ENCODE measurements at regions of chr14 and their contacts with region 1.

Region 1: GRCh38 chr14:103808403-103809001 is 38.9 kb downstream of the PPP1R13B start:
- DNase-seq: peak; percentile 85
- H3K4me3 ChIP-seq: no peak overlapping the region
- H3K27ac ChIP-seq: no peak overlapping the region
- H3K4me1 ChIP-seq: no peaks in the 10 kb centered on the region
- H3K27me3 ChIP-seq: no peaks in the 10 kb centered on the region
- CTCF ChIP-seq: peak; percentile 89

Region 2: GRCh38 chr14:103867523-103867953 is 59.0 kb after region 1 on chr14:
- CTCF ChIA-PET with region 1: no interaction called
- POLR2A ChIA-PET with region 1: interaction called, 16 read pairs
- intact Hi-C with region 1: no loop called
- DNase-seq: peak; percentile 45
- H3K4me3 ChIP-seq: no peak overlapping the region
- H3K27ac ChIP-seq: no peak overlapping the region
- H3K4me1 ChIP-seq: peaks cover 13% of the 10 kb centered on the region
- H3K27me3 ChIP-seq: no peaks in the 10 kb centered on the region
- CTCF ChIP-seq: no peak

Region 3: GRCh38 chr14:103910262-103910935 is 101.9 kb after region 1 on chr14:
- CTCF ChIA-PET with region 1: interaction called, 9 read pairs
- POLR2A ChIA-PET with region 1: no interaction called
- intact Hi-C with region 1: loop called (anchors 2 kb)
- DNase-seq: peak; percentile 86
- H3K4me3 ChIP-seq: no peak overlapping the region
- H3K27ac ChIP-seq: no peak overlapping the region
- H3K4me1 ChIP-seq: peaks cover 14% of the 10 kb centered on the region
- H3K27me3 ChIP-seq: no peaks in the 10 kb centered on the region
- CTCF ChIP-seq: peak; percentile 85

Region 4: DNA sequence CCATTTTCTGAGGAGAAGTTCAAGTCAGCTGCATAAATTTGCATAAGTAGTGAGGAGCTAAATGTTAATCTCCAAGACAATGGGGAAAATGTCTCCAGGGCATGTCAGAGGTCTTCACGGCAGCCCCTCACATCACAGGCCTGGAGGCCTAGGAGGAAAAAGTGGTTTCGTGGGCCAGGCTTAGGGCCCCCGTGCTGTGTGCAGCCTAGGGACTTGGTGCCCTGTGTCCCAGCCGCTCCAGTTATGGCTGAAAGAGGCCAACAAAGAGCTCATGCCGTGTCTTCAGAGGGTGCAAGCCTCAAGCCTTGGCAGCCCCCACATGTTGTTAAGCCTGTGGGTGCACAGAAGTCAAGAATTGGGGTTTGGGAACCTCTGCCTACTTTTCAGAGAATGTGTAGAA is 175.7 kb after region 1 on chr14:
- CTCF ChIA-PET with region 1: interaction called, 6 read pairs
- POLR2A ChIA-PET with region 1: no interaction called
- intact Hi-C with region 1: loop called (anchors 1 kb)
- DNase-seq: no peak
- H3K4me3 ChIP-seq: no peak overlapping the region
- H3K27ac ChIP-seq: no peak overlapping the region
- H3K4me1 ChIP-seq: no peaks in the 10 kb centered on the region
- H3K27me3 ChIP-seq: no peaks in the 10 kb centered on the region
- CTCF ChIP-seq: no peak

Region 5: GRCh38 chr14:104064003-104064402 is 255.5 kb after region 1 on chr14:
- CTCF ChIA-PET with region 1: no interaction called
- POLR2A ChIA-PET with region 1: no interaction called
- intact Hi-C with region 1: no loop called
- DNase-seq: no peak
- H3K4me3 ChIP-seq: no peak overlapping the region
- H3K27ac ChIP-seq: no peak overlapping the region
- H3K4me1 ChIP-seq: no peaks in the 10 kb centered on the region
- H3K27me3 ChIP-seq: peaks cover 9% of the 10 kb centered on the region
- CTCF ChIP-seq: no peak

Region 6: GRCh38 chr14:104078031-104078455 is 269.5 kb after region 1 on chr14:
- CTCF ChIA-PET with region 1: interaction called, 5 read pairs
- POLR2A ChIA-PET with region 1: no interaction called
- intact Hi-C with region 1: loop called (anchors 5 kb)
- DNase-seq: peak; percentile 91
- H3K4me3 ChIP-seq: no peak overlapping the region
- H3K27ac ChIP-seq: no peak overlapping the region
- H3K4me1 ChIP-seq: no peaks in the 10 kb centered on the region
- H3K27me3 ChIP-seq: no peaks in the 10 kb centered on the region
- CTCF ChIP-seq: peak; percentile 100

Region 7: DNA sequence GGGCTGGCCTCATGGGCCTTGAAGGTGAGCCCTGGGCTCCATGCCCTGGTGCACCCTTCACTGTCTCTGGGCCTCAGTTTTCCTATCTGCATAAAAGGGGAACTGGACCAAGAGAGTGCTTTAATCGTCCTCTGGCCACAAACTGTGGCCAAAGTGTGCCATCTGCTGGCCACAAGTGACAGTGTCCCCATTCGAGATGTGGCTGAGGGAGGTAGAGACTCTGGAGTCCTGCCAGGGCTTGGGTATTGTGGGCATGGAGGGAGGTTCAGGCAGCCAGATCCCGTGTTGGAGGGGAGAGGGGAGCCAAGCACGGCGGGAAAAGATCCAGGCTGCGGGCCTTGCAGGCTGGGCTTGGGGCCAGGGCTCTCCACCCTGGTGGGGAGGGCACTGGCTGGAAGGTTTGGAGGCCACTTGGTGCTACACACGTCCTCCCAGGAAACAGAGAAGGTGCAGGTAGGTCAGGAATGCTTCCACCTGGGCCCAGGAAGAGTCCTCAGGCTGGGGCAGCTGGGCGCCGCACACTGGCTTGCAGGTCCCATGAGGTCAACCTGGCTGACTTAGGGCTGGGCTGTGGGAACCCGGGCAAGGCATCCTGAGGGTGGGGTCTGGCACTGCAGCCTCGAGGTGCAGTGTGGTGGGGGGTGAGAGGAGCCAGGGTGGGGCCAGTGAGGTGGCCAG is 322.6 kb after region 1 on chr14:
- CTCF ChIA-PET with region 1: no interaction called
- POLR2A ChIA-PET with region 1: no interaction called
- intact Hi-C with region 1: loop called (anchors 5 kb)
- DNase-seq: peak; percentile 67
- H3K4me3 ChIP-seq: no peak overlapping the region
- H3K27ac ChIP-seq: no peak overlapping the region
- H3K4me1 ChIP-seq: peaks cover 20% of the 10 kb centered on the region
- H3K27me3 ChIP-seq: peaks cover 18% of the 10 kb centered on the region
- CTCF ChIP-seq: peak; percentile 82